ENCODE measurements at regions of chr17 and their contacts with region 1.

Region 1: DNA sequence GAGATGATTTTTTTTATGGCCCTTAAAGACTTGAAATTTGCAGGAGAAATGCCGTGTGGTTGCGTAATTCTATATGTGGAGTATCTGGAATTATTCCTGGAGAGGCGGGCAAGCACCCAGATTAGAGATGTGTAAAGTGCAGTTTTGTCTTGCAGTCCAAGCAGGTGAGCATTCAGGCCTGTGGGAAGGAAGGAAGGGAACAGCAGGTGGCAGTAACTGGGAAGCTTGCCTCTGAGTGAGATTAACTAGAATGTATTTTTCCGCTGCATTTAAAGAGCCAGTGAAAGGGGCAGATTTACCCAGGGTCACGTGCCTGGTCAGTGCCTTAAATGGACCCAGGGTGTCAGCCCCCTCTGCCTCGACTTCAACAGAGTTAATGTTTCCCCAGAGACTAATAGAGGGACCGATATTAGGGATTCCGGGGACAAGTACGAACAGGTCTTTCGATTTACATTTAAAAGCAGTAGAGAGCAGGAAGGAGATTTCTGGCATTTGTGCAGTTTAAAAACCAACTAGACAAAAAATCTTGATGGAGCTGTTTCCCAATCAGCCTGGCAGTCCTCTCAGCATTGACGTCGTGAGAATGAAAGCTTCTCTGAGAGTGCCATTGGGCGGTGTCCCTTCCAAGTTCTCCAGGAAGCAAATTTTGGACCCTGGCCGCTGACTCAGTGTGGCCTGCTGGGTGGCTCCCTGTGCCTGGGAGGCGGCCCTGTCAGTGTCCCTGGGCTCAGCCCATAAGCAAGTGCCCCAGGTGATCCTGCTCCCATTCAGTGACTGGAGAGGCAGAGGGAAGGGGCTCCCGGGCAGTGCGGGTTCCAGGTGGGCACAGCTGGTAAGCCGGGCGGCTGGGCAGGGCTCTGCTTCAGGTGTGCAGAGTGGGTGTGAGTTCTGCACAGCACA is 38.2 kb downstream of the KSR1 start:
- DNase-seq: no peak
- ATAC-seq: no peak
- H3K4me3 Mint-ChIP-seq: no peak overlapping the region
- H3K27ac Mint-ChIP-seq: no peak overlapping the region
- H3K4me1 Mint-ChIP-seq: peaks cover 35% of the 10 kb centered on the region
- H3K27me3 Mint-ChIP-seq: no peaks in the 10 kb centered on the region
- CTCF ChIP-seq: no peak

Region 2: DNA sequence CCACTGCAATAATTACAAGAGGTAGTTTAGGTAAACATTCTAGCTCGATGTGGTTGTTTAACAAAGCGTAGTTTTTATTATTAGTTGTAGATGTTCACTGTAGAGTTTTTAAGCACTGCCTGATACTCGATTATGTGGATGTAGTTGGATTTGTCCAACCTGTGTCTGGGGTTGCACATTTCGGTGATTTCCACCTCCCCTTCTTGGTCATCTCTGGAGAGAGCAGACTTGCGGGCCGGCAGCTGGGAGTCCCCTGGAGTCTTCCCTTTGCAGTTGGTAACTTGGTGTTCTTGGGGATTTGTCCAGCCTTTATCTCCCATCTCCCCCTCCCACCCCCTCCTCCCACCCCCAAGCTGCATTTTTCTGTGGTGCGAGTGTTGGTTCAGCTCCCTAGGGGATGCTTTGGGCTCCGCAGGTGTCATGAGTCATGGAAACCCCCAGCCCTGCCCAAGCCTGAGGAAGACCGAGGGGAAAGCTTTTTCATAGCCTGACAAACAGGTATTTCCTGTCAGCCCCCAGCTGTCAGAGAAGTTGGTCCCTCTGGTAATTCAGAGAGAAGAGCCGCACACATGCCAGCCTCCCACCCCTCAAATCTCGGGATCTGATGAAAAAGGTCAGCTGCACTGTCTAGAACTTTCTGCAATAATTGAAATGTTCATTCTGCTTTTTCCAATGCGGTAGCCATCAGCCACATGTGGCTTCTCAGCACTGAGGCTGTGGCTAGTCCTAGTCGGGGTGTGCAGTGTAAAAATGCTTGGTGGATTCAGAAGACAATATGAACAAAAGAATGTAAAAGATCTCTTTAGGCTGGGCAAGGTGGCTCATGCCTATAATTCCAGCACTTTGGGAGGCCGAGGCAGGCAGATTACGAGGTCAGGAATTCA is 12.1 kb after region 1 on chr17:
- CTCF ChIA-PET with region 1: no interaction called
- POLR2A ChIA-PET with region 1: interaction called, 4 read pairs
- intact Hi-C with region 1: loop called (anchors 1 kb)
- DNase-seq: peak; percentile 49
- ATAC-seq: peak; percentile 88
- H3K4me3 Mint-ChIP-seq: peak overlapping the region; percentile 62
- H3K27ac Mint-ChIP-seq: peak overlapping the region; percentile 83
- H3K4me1 Mint-ChIP-seq: peaks cover 46% of the 10 kb centered on the region
- H3K27me3 Mint-ChIP-seq: no peaks in the 10 kb centered on the region
- CTCF ChIP-seq: no peak

Region 3: DNA sequence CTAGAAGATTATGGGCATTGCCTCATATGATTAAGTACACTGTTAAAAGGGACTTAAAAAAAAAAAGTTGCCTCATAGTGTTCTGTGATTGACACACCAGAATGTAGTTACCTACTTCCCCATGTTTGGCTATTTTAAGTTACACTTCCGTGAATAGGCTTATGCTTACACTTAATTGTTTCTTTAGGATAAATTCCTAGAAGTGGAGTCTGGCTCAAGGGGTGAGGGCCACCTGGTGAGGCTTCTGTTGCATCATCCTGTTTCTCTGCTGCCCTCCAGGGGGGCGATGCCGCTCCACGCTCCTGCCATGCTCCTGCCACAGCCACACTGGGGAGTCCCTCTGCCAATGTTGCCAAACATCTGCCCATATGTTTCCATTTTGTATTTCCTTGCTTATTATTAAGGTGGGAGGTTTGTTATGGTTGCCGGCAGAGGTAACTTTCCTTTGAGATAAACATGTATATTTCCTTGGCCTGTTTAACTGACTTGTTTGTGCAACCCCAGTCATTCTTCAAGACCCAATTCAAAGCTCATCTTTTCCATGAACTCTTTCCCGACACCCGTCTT is 34.9 kb after region 1 on chr17:
- CTCF ChIA-PET with region 1: no interaction called
- POLR2A ChIA-PET with region 1: no interaction called
- intact Hi-C with region 1: no loop called
- DNase-seq: no peak
- ATAC-seq: no peak
- H3K4me3 Mint-ChIP-seq: no peak overlapping the region
- H3K27ac Mint-ChIP-seq: no peak overlapping the region
- H3K4me1 Mint-ChIP-seq: peaks cover 60% of the 10 kb centered on the region
- H3K27me3 Mint-ChIP-seq: no peaks in the 10 kb centered on the region
- CTCF ChIP-seq: no peak